Thyroid gland (tissue), 4 donors: ENCODE measurements at regions of chr20 and their contacts with region 1.

Region 1: GRCh38 chr20:31835977-31836852 is 9.2 kb downstream of the FOXS1 start:
- DNase-seq: peak; percentile 46 to 55
- H3K4me3 ChIP-seq: no peak overlapping the region
- H3K27ac ChIP-seq: no peak overlapping the region
- H3K4me1 ChIP-seq: peaks cover 0 to 32% of the 10 kb centered on the region in 2 donors
- H3K27me3 ChIP-seq: no peaks in the 10 kb centered on the region
- CTCF ChIP-seq: no peak
- POLR2A ChIP-seq: no peak

Region 2: GRCh38 chr20:31630187-31630790 is 205.9 kb before region 1 on chr20:
- intact Hi-C with region 1: loop called (anchors 10 kb)
- DNase-seq: no peak
- H3K4me3 ChIP-seq: no peak overlapping the region
- H3K27ac ChIP-seq: no peak overlapping the region
- H3K4me1 ChIP-seq: no peaks in the 10 kb centered on the region
- H3K27me3 ChIP-seq: no peaks in the 10 kb centered on the region
- CTCF ChIP-seq: no peak
- POLR2A ChIP-seq: no peak

Region 3: GRCh38 chr20:31740208-31740607 is 96.0 kb before region 1 on chr20:
- intact Hi-C with region 1: loop called (anchors 10 kb)
- DNase-seq: no peak
- H3K4me3 ChIP-seq: no peak overlapping the region
- H3K27ac ChIP-seq: no peak overlapping the region
- H3K4me1 ChIP-seq: peaks cover 5 to 9% of the 10 kb centered on the region in 2 donors
- H3K27me3 ChIP-seq: no peaks in the 10 kb centered on the region
- CTCF ChIP-seq: no peak
- POLR2A ChIP-seq: no peak